ENCODE measurements at regions of chr18 and their contacts with region 1.

Region 1: DNA sequence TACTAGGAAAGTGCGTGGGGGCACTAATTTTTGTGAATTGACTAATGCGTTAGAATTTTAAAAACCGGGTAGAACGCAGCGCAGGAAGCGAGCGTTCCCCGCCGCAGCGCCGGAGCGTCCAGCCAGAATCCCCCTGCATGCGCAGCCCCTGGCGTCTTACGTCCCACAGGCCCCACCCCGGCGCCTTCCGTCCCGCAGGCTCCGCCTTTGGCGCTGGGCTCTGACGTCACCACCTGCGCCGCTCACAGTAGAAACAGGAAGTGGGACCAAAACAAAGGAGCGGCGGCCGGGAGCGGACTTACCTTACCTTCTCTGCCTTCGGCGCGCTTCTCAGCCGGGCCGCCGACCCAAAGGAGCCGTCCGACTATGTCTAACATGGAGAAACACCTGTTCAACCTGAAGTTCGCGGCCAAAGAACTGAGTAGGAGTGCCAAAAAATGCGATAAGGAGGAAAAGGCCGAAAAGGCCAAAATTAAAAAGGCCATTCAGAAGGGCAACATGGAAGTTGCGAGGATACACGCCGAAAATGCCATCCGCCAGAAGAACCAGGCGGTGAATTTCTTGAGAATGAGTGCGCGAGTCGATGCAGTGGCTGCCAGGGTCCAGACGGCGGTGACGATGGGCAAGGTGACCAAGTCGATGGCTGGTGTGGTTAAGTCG is at the start of gene CHMP1B:
- DNase-seq: peak; percentile 95
- H3K4me3 Mint-ChIP-seq: peak within 1 kb of the TSS; percentile 96
- H3K27ac Mint-ChIP-seq: peak within 1 kb of the TSS; percentile 99
- H3K4me1 Mint-ChIP-seq: peaks cover 12% of the 10 kb centered on the region
- H3K27me3 Mint-ChIP-seq: no peaks in the 10 kb centered on the region
- CTCF ChIP-seq: no peak
- total RNA-seq, gene CHMP1B: 39.7 and 50.1 TPM in 2 replicates

Region 2: GRCh38 chr18:11733031-11733430 is 118.2 kb before region 1 on chr18:
- CTCF ChIA-PET with region 1: interaction called, 5 read pairs
- POLR2A ChIA-PET with region 1: interaction called, 5 read pairs
- intact Hi-C with region 1: loop called (anchors 5 kb)
- DNase-seq: peak; percentile 75
- H3K4me3 Mint-ChIP-seq: peak overlapping the region; percentile 17
- H3K27ac Mint-ChIP-seq: no peak overlapping the region
- H3K4me1 Mint-ChIP-seq: no peaks in the 10 kb centered on the region
- H3K27me3 Mint-ChIP-seq: peaks cover 30% of the 10 kb centered on the region
- CTCF ChIP-seq: peak; percentile 90

Region 3: DNA sequence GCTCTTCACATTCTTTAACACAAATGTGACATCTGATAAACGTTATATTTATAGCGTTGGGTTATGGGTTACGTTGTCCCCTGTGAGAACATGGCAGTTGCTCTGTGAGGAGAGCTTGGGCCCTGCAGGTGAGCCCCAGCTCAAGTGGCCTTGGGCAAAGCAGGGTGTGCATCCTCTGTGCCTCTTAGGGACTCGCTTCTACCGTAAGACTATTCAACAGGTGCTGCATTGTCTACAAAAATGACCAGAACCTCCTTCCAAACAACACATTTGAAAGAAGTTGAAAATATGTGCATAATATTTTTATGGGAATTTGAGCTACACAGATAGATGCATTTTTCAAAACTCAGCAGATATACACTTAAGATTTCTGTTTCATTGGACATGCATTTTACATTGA is 16.5 kb before region 1 on chr18:
- CTCF ChIA-PET with region 1: interaction called, 3 read pairs
- POLR2A ChIA-PET with region 1: interaction called, 11 read pairs
- intact Hi-C with region 1: no loop called
- DNase-seq: no peak
- H3K4me3 Mint-ChIP-seq: no peak overlapping the region
- H3K27ac Mint-ChIP-seq: no peak overlapping the region
- H3K4me1 Mint-ChIP-seq: no peaks in the 10 kb centered on the region
- H3K27me3 Mint-ChIP-seq: no peaks in the 10 kb centered on the region
- CTCF ChIP-seq: no peak

Region 4: DNA sequence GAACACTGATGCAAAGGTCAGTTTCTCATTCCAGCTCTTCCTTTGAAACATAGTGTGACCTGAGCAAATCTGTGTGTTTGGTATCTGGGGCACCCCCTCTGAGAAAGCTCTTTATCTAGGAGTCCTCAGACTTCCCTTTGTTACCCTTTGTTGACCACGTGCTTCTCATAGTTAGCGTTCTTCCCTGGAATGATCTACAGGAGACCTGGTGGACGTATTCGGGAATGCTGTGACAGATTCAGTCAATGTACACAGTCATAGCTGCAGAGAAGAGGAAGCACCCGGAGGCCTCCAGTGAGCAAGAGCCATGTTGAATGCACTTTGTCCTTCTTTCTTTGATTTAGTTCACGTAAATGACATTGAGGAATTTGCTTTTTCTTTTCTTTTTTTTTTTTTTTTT is 10.8 kb before region 1 on chr18:
- CTCF ChIA-PET with region 1: interaction called, 3 read pairs
- POLR2A ChIA-PET with region 1: interaction called, 11 read pairs
- intact Hi-C with region 1: no loop called
- DNase-seq: no peak
- H3K4me3 Mint-ChIP-seq: no peak overlapping the region
- H3K27ac Mint-ChIP-seq: peak overlapping the region; percentile 42
- H3K4me1 Mint-ChIP-seq: no peaks in the 10 kb centered on the region
- H3K27me3 Mint-ChIP-seq: no peaks in the 10 kb centered on the region
- CTCF ChIP-seq: no peak

Region 5: DNA sequence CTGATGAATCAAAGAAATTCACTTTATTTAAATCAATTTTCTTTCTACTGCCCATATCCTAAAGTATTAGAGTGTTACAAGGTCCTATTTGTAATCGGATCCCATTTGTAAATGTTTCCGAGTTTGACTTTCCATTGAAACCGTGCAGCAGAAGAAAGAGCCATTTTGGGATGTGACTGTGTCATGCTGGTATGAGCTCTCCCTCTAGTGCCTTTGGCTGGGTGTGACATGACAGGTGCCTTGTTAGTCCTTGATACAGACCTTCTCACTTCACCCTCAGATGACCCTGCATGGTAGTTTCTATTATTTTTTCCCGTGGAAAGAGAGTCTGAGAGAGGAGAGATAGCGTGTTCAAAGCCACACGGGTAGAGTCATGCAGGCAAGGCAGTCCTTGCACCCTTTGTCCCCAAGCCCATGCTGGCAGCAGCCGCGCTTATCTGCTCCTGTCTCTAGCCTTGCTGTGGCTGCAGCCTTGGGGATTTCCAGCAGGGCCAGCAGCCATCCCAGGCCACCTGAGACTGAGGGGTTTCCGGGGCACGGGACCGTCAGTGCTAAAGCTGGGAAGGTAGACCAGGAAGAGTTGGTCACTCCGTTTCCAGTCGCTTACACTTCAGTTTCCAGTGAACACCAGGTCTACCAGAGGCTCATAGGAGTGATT is 21.3 kb after region 1 on chr18:
- CTCF ChIA-PET with region 1: interaction called, 6 read pairs
- POLR2A ChIA-PET with region 1: interaction called, 14 read pairs
- intact Hi-C with region 1: no loop called
- DNase-seq: peak; percentile 73
- H3K4me3 Mint-ChIP-seq: no peak overlapping the region
- H3K27ac Mint-ChIP-seq: no peak overlapping the region
- H3K4me1 Mint-ChIP-seq: no peaks in the 10 kb centered on the region
- H3K27me3 Mint-ChIP-seq: no peaks in the 10 kb centered on the region
- CTCF ChIP-seq: peak; percentile 62

Region 6: DNA sequence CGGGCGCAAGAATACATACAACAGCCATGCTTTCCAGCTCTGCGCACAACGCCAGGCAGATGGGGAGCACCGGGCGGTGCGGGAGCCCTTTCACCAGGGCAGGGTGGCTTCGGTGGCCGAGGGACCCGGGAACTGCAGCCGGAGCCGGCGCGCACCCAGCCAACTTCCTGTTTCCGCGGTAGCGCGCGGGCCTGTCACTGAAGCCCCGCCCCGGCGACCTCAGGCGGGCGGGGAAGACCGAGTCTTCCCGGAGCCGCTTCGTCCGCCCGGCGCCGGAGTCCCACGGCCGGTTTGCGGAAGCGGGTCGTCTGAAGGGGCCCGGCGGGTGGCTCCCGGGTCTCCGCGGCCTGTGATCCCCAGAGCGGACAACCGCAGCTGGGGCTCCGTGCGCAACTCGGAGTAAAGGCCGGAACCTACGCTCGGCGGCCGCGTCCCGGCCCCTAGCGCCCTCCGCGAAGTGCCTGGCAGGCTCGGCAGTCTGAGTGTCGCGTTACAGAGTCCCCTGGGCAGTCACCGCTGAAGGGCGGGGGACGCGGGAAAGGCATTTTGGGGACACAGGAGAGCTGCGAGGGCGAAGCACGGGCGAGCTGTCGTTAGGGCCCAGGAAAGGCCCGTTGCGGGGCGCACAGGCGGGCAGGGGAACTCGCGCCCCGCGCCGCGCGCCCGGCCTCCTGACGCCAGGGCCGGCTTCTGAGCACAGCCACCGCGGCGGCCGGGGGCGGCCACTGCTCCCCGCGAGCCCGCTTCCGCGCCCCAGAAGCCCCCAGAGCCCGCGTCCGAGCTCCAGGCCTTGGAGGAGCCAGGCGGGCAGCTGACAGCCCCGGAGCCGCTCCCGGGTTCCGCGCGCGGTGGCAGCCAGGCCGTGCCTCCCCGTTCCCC is 57.1 kb after region 1 on chr18 and contains the start of gene MPPE1:
- CTCF ChIA-PET with region 1: no interaction called
- POLR2A ChIA-PET with region 1: interaction called, 17 read pairs
- intact Hi-C with region 1: no loop called
- DNase-seq: peak; percentile 82
- H3K4me3 Mint-ChIP-seq: peak within 1 kb of the TSS; percentile 92
- H3K27ac Mint-ChIP-seq: peak within 1 kb of the TSS; percentile 89
- H3K4me1 Mint-ChIP-seq: no peaks in the 10 kb centered on the region
- H3K27me3 Mint-ChIP-seq: no peaks in the 10 kb centered on the region
- CTCF ChIP-seq: no peak
- total RNA-seq, gene MPPE1: 15.7 and 24.7 TPM in 2 replicates

Measured in MCF 10A (cell line).